Posterior cingulate gyrus (tissue), 11 donors: ENCODE measurements at regions of chr1 and their contacts with region 1.

Region 1: GRCh38 chr1:39538588-39539465 is 37.8 kb downstream of the PABPC4 start:
- DNase-seq: peak; percentile 27 to 96 (median 76)

Region 2: DNA sequence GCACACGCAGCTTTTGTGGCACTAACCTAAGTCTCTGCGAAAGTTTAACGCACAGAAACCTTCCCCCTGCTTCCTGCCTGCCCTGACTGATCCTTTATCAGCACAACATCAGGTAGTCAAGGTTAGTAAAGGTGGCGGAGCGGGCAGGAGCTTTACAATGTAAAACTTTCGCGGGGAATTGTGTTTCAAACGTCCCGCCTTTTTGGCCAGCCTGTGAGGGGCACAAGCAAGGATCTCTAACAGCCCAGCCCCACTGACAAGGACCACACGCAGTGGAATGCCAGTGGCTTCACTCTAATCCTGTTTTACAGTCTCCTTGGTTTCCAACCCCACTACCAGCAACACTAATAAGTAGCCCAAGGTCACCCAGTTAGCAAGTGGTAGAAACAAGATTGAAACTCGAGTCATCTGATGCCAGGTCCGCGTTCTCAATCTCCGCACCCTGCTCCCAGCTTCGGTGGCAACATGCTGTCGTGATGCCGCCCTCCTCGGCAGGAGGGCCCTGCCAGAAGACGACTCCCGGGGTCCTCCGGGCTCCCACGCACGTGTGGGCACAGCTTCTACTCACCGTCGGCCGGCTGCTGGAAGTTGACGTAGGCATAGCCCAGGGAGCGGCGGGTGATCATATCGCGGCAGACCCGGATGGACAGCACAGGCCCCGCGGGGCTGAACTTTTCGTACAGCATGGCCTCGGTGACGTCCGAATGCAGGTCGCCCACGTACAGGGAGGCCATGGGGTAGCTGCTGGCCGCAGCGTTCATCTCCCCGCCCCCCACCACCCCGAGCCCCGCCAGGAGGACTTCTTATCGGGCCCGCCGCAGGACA is 36.6 kb after region 1 on chr1:
- intact Hi-C with region 1: loop called (anchors 2 kb)
- DNase-seq: peak in 8 of 10 donors; percentile 24 to 92 (median 49)